IMR-90 (cell line): ENCODE measurements at regions of chr6 and their contacts with region 1.

Region 1: GRCh38 chr6:26122793-26123674 is 35.8 kb downstream of the HFE start:
- DNase-seq: peak; percentile 99
- ATAC-seq: peak; percentile 47
- H3K4me3 ChIP-seq: peak overlapping the region; percentile 54
- H3K27ac ChIP-seq: peak overlapping the region; percentile 89
- H3K4me1 ChIP-seq: peaks cover 5% of the 10 kb centered on the region
- H3K27me3 ChIP-seq: no peaks in the 10 kb centered on the region
- CTCF ChIP-seq: no peak
- POLR2A ChIP-seq: no peak; the same call in 1 of the 2 replicates
- RAD21 ChIP-seq: no peak

Region 2: DNA sequence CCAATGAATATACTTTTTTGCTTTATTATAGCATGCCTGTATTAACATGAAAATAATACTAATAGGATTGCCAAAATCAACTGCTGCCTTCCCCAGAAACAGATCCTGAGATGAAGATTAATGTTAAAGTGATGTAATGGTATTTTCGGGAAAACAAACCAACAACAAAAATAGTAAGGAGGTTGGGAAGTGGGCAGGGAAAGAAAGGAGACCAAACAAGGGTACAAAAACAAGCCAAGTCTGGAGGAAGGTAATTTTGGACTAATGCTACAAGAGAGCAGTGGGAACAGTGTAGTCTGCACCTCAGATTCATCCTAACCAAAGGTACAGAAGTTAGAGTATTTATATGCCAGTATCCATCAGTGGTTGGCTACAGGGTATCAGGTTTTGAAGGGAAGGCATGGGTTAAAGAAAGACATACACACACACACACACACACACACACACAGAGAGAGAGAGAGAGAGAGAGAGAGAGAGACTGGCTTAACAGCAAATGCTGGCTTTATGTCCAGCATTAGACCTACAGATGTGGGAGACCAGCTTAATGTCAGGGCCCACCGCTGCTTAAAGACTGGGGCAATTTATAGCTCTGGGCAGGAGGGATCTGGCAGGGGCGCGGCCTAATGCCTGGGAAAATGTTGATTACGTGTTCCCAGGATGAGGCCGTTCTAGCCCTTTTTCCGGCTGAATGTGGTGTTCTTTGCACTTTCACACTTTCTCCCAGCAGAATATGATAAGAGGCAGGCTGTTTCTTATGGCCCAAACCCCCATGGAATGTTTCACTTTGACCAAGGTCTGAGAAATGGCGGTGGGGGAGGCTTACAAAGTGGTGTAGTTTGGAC is 287.4 kb before region 1 on chr6:
- CTCF ChIA-PET with region 1: no interaction called
- POLR2A ChIA-PET with region 1: no interaction called
- dilution Hi-C with region 1: no loop called
- in situ Hi-C with region 1: no loop called
- intact Hi-C with region 1: no loop called
- DNase-seq: no peak
- ATAC-seq: no peak
- H3K4me3 ChIP-seq: no peak overlapping the region
- H3K27ac ChIP-seq: no peak overlapping the region
- H3K4me1 ChIP-seq: no peaks in the 10 kb centered on the region
- H3K27me3 ChIP-seq: no peaks in the 10 kb centered on the region
- CTCF ChIP-seq: no peak
- POLR2A ChIP-seq: no peak
- RAD21 ChIP-seq: no peak

Region 3: GRCh38 chr6:26045065-26045927 is 77.7 kb before region 1 on chr6:
- CTCF ChIA-PET with region 1: no interaction called
- POLR2A ChIA-PET with region 1: interaction called, 19 read pairs
- dilution Hi-C with region 1: no loop called
- in situ Hi-C with region 1: no loop called
- intact Hi-C with region 1: no loop called
- DNase-seq: peak; percentile 94
- ATAC-seq: peak; percentile 73
- H3K4me3 ChIP-seq: peak overlapping the region; percentile 63
- H3K27ac ChIP-seq: peak overlapping the region; percentile 51
- H3K4me1 ChIP-seq: no peaks in the 10 kb centered on the region; the same call in 1 of the 2 replicates
- H3K27me3 ChIP-seq: no peaks in the 10 kb centered on the region
- CTCF ChIP-seq: peak; percentile 21; the same call in 1 of the 2 replicates
- POLR2A ChIP-seq: peak; percentile 98
- RAD21 ChIP-seq: no peak

Region 4: DNA sequence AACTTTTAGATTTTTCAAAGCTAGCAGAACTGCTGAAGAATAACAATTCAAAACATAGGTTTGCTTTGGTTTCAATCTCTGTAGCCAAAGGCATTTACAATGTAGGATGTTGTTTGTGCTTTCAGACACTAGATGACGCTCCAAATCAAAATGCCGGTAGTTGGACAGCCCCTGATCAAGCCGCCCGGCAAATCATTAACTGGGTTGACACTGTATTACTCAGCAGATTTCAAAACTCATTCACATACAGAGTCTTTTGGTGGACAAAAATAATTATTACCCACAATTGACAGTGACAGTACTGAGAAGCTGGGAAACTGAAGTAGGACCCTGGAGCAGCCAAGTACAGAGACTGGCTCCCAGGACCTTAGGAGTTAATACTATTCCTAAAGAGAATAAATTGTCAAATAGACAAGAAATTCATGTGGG is 57.1 kb before region 1 on chr6:
- CTCF ChIA-PET with region 1: interaction called, 7 read pairs
- POLR2A ChIA-PET with region 1: interaction called, 10 read pairs
- dilution Hi-C with region 1: no loop called
- in situ Hi-C with region 1: no loop called
- intact Hi-C with region 1: loop called (anchors 1 kb)
- DNase-seq: peak; percentile 82
- ATAC-seq: peak; percentile 98
- H3K4me3 ChIP-seq: no peak overlapping the region
- H3K27ac ChIP-seq: peak overlapping the region; percentile 33; the same call in 1 of the 2 replicates
- H3K4me1 ChIP-seq: no peaks in the 10 kb centered on the region
- H3K27me3 ChIP-seq: no peaks in the 10 kb centered on the region
- CTCF ChIP-seq: peak; percentile 96
- POLR2A ChIP-seq: no peak
- RAD21 ChIP-seq: peak; percentile 90

Region 5: GRCh38 chr6:26156076-26156849 is 33.2 kb after region 1 on chr6:
- CTCF ChIA-PET with region 1: interaction called, 3 read pairs
- POLR2A ChIA-PET with region 1: interaction called, 95 read pairs
- dilution Hi-C with region 1: no loop called
- in situ Hi-C with region 1: no loop called
- intact Hi-C with region 1: loop called (anchors 1 kb)
- DNase-seq: peak; percentile 87
- ATAC-seq: peak; percentile 80
- H3K4me3 ChIP-seq: peak overlapping the region; percentile 82
- H3K27ac ChIP-seq: peak overlapping the region; percentile 81
- H3K4me1 ChIP-seq: 0 out of 2 replicates have a peak, but pooled peaks cover 1% of the 10 kb centered on the region
- H3K27me3 ChIP-seq: no peaks in the 10 kb centered on the region
- CTCF ChIP-seq: no peak
- POLR2A ChIP-seq: peak; percentile 99
- RAD21 ChIP-seq: no peak

Region 6: DNA sequence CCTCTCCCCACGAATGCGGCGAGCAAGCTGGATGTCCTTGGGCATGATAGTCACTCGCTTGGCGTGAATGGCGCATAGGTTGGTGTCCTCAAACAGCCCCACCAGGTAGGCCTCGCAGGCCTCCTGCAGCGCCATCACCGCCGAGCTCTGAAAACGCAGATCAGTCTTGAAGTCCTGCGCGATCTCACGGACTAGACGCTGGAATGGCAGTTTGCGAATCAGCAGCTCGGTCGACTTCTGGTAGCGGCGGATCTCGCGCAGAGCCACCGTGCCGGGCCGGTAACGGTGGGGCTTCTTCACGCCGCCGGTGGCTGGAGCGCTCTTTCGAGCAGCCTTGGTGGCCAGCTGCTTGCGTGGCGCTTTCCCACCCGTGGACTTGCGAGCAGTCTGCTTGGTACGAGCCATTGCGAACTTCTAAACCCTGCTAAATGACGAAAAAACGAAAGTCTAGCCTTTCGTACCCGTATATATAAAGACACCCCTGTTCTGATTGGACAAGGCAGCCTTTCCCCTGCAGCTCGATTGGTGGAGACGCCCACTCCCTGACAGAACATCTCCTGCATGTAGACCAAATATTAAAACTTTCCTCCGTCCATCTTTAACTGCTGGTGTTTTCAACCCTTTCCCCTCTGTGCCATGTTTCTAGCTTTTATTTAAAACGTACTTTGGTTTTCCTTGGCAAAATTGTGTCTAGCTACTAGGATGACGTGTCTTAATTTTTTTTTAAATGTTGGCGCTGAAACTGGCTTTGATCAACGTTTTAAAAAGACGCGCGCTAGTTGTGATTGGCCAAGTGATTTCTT is 74.0 kb after region 1 on chr6:
- CTCF ChIA-PET with region 1: no interaction called
- POLR2A ChIA-PET with region 1: interaction called, 24 read pairs
- dilution Hi-C with region 1: no loop called
- in situ Hi-C with region 1: no loop called
- intact Hi-C with region 1: loop called (anchors 1 kb)
- DNase-seq: peak; percentile 95
- ATAC-seq: peak; percentile 68
- H3K4me3 ChIP-seq: peak overlapping the region; percentile 55
- H3K27ac ChIP-seq: peak overlapping the region; percentile 86
- H3K4me1 ChIP-seq: no peaks in the 10 kb centered on the region; the same call in 1 of the 2 replicates
- H3K27me3 ChIP-seq: no peaks in the 10 kb centered on the region
- CTCF ChIP-seq: no peak; the same call in 1 of the 2 replicates
- POLR2A ChIP-seq: peak; percentile 97
- RAD21 ChIP-seq: no peak

Region 7: DNA sequence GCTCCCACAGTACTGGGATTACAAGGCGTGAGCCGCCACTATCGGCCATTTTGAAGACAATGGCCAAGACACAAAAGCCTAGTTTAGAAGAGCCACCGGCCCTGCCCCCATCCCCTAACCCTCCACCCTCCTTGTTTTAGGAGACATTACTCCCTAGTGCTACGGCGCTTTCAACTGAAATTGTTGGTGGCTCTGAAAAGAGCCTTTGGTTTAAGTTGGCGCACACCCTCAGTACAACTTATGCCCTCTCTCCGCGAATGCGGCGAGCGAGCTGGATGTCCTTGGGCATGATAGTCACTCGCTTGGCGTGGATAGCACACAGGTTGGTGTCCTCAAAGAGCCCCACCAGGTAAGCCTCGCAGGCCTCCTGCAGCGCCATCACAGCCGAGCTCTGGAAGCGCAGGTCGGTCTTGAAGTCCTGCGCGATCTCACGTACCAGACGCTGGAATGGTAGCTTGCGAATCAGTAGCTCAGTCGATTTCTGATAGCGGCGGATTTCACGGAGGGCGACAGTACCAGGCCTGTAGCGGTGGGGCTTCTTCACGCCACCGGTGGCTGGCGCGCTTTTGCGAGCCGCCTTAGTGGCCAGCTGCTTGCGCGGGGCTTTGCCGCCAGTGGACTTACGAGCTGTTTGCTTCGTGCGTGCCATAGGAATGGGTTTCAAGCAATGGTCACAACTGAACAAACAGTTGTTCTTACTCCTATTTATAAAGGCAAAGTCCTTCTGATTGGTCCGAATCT is 127.1 kb after region 1 on chr6:
- CTCF ChIA-PET with region 1: no interaction called
- POLR2A ChIA-PET with region 1: interaction called, 19 read pairs
- dilution Hi-C with region 1: no loop called
- in situ Hi-C with region 1: no loop called
- intact Hi-C with region 1: no loop called
- DNase-seq: peak; percentile 73
- ATAC-seq: peak; percentile 61
- H3K4me3 ChIP-seq: peak overlapping the region; percentile 66
- H3K27ac ChIP-seq: peak overlapping the region; percentile 50
- H3K4me1 ChIP-seq: no peaks in the 10 kb centered on the region
- H3K27me3 ChIP-seq: no peaks in the 10 kb centered on the region
- CTCF ChIP-seq: peak; percentile 38
- POLR2A ChIP-seq: peak; percentile 89
- RAD21 ChIP-seq: no peak